CD8-positive, alpha-beta memory T cell (primary cell): ENCODE measurements at regions of chr15 and their contacts with region 1.

Region 1: GRCh38 chr15:74950078-74951000 is 6.2 kb downstream of the RPP25 start:
- DNase-seq: peak; percentile 64 to 82 (median 69)
- H3K4me3 ChIP-seq: no peak overlapping the region
- H3K4me3 Mint-ChIP-seq: peak overlapping the region in 1 of 7 donors; percentile 1
- H3K27ac ChIP-seq: no peak overlapping the region
- H3K27ac Mint-ChIP-seq: no peak overlapping the region
- H3K4me1 ChIP-seq: peaks cover 3% of the 10 kb centered on the region
- H3K4me1 Mint-ChIP-seq: peaks cover 0 to under 1% (median 0%) of the 10 kb centered on the region in 3 donors
- H3K27me3 ChIP-seq: no peaks in the 10 kb centered on the region
- H3K27me3 Mint-ChIP-seq: peaks cover 0 to 3% of the 10 kb centered on the region in 2 donors

Region 2: GRCh38 chr15:74781431-74782258 is 168.7 kb before region 1 on chr15 and contains the start of gene CSK:
- CTCF ChIA-PET with region 1: interaction called, 19 read pairs
- POLR2A ChIA-PET with region 1: no interaction called
- DNase-seq: peak; percentile 76 to 87 (median 83)
- H3K4me3 ChIP-seq: peak within 1 kb of the TSS; percentile 99
- H3K4me3 Mint-ChIP-seq: peak within 1 kb of the TSS; percentile 85 to 98 (median 95)
- H3K27ac ChIP-seq: peak within 1 kb of the TSS; percentile 74
- H3K27ac Mint-ChIP-seq: peak within 1 kb of the TSS; percentile 93 to 100 (median 98)
- H3K4me1 ChIP-seq: peaks cover 66% of the 10 kb centered on the region
- H3K4me1 Mint-ChIP-seq: peaks cover 71 to 81% (median 76%) of the 10 kb centered on the region in 3 donors
- H3K27me3 ChIP-seq: no peaks in the 10 kb centered on the region
- H3K27me3 Mint-ChIP-seq: peaks cover 0 to 5% of the 10 kb centered on the region in 2 donors
- total RNA-seq, gene CSK: 288 to 294 TPM

Region 3: GRCh38 chr15:74787251-74788041 is 162.9 kb before region 1 on chr15:
- CTCF ChIA-PET with region 1: interaction called, 19 read pairs
- POLR2A ChIA-PET with region 1: no interaction called
- DNase-seq: peak; percentile 88 to 99 (median 96)
- H3K4me3 ChIP-seq: peak overlapping the region; percentile 80
- H3K4me3 Mint-ChIP-seq: peak overlapping the region; percentile 85 to 97 (median 91)
- H3K27ac ChIP-seq: peak overlapping the region; percentile 69
- H3K27ac Mint-ChIP-seq: peak overlapping the region; percentile 92 to 99 (median 98)
- H3K4me1 ChIP-seq: peaks cover 75% of the 10 kb centered on the region
- H3K4me1 Mint-ChIP-seq: peaks cover 77 to 89% (median 84%) of the 10 kb centered on the region in 3 donors
- H3K27me3 ChIP-seq: no peaks in the 10 kb centered on the region
- H3K27me3 Mint-ChIP-seq: peaks cover 0 to 7% of the 10 kb centered on the region in 2 donors

Region 4: DNA sequence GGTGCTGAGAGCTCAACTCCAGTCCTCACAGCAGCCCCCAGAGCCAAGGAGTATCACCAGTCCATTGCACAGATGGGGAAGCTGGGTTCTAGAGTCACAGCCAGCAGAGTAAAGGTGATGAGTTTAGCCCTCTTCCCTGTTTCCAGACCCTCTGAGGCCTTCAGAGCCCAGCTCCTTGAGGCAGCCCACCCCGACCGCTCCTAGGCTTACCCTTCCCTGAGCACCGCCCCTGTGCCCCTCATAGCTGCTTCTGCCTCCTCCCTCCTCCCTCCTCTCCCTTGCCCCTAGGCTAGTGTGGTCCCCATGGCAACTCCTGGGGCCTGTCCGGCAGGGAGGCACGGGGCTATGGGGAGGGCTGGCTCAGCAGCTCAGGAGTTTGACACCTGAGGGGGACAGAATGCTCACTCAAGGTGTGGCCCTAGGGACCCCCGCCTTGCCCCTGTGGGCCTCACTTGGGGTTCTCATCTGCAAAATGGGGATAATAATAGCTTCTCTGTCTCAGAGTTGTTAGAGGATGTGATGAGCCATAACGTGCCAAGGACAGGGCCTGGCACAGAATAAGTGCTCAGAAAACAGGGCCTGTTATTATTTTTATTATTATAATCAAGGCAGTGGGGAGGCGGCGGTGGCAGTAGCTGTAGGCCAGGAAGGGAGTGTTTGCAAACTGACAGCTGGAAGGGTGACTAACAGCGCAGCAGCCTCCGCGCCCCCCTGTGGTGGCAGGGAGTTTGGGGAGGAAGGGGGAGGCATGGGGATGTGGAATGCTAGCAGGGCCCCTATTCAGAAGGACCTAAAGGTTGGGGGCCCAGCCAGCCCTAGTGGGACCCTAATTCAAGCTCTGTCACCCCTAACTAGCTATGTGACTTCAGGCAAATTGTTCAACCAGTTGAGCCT is 157.0 kb before region 1 on chr15:
- CTCF ChIA-PET with region 1: interaction called, 19 read pairs
- POLR2A ChIA-PET with region 1: interaction called, 3 read pairs
- DNase-seq: peak; percentile 71 to 85 (median 74)
- H3K4me3 ChIP-seq: peak overlapping the region; percentile 46
- H3K4me3 Mint-ChIP-seq: peak overlapping the region; percentile 66 to 91 (median 85)
- H3K27ac ChIP-seq: no peak overlapping the region
- H3K27ac Mint-ChIP-seq: peak overlapping the region; percentile 81 to 98 (median 93)
- H3K4me1 ChIP-seq: peaks cover 99% of the 10 kb centered on the region
- H3K4me1 Mint-ChIP-seq: peaks cover 84 to 93% (median 89%) of the 10 kb centered on the region in 3 donors
- H3K27me3 ChIP-seq: no peaks in the 10 kb centered on the region
- H3K27me3 Mint-ChIP-seq: no peaks in the 10 kb centered on the region

Region 5: DNA sequence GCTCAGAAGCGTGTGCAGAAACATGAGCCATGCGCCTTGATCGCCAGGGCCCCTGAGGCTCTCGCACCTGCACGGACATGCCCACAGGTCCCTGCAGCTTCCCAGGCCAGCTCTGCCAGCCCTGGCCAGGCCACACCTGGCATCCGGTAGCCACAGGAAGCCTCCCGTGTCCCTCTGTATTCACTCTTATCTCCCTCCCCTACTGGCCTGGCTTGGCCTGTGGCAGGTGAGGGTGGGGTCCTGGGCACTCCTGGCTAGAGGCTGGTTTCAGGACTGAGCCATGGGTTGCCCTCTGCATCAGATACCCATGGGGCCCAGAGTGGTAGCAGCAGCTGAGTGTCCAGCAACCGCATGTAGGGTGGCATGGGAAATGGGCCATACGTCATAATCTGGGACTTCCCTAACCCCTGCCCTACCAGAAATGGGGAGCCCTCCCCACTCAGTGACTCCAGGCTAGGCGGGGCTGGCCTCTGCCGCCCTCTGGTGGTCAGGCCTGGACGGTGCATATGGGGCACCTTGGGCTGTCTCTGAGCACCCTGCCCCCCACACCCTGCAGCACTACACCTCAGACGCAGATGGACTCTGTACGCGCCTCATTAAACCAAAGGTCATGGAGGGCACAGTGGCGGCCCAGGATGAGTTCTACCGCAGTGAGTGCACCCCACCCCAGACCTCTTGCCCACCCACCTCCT is 150.3 kb before region 1 on chr15:
- CTCF ChIA-PET with region 1: interaction called, 10 read pairs
- POLR2A ChIA-PET with region 1: interaction called, 3 read pairs
- DNase-seq: peak; percentile 81 to 91 (median 85)
- H3K4me3 ChIP-seq: peak overlapping the region; percentile 32
- H3K4me3 Mint-ChIP-seq: peak overlapping the region in 6 of 7 donors; percentile 19 to 40 (median 26)
- H3K27ac ChIP-seq: peak overlapping the region; percentile 65
- H3K27ac Mint-ChIP-seq: peak overlapping the region; percentile 79 to 97 (median 94)
- H3K4me1 ChIP-seq: peaks cover 57% of the 10 kb centered on the region
- H3K4me1 Mint-ChIP-seq: peaks cover 42 to 53% (median 48%) of the 10 kb centered on the region in 3 donors
- H3K27me3 ChIP-seq: no peaks in the 10 kb centered on the region
- H3K27me3 Mint-ChIP-seq: no peaks in the 10 kb centered on the region

Region 6: DNA sequence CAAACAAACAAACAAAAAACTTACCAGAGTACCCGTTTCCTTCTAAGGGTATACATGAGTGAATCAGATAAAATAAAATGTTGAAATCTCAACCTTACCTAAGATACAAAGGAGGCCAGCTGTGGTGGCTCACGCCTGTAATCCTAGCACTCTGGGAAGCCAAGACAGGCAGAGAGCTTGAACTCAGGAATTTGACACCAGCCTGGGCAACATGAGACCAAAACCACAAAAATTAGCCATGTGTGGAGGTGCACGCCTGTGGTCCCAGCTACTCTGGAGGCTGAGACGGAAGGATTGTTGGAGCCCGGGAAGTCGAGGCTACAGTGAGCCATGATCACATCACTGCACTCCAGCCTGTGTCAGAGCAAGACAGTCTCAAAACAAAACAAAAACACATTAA is 32.7 kb before region 1 on chr15:
- CTCF ChIA-PET with region 1: no interaction called
- POLR2A ChIA-PET with region 1: no interaction called
- DNase-seq: no peak
- H3K4me3 ChIP-seq: no peak overlapping the region
- H3K4me3 Mint-ChIP-seq: no peak overlapping the region
- H3K27ac ChIP-seq: no peak overlapping the region
- H3K27ac Mint-ChIP-seq: no peak overlapping the region
- H3K4me1 ChIP-seq: no peaks in the 10 kb centered on the region
- H3K4me1 Mint-ChIP-seq: no peaks in the 10 kb centered on the region
- H3K27me3 ChIP-seq: no peaks in the 10 kb centered on the region
- H3K27me3 Mint-ChIP-seq: no peaks in the 10 kb centered on the region

Region 7: GRCh38 chr15:74978503-74978902 is 28.2 kb after region 1 on chr15:
- CTCF ChIA-PET with region 1: no interaction called
- POLR2A ChIA-PET with region 1: no interaction called
- DNase-seq: no peak
- H3K4me3 ChIP-seq: no peak overlapping the region
- H3K4me3 Mint-ChIP-seq: no peak overlapping the region
- H3K27ac ChIP-seq: no peak overlapping the region
- H3K27ac Mint-ChIP-seq: no peak overlapping the region
- H3K4me1 ChIP-seq: no peaks in the 10 kb centered on the region
- H3K4me1 Mint-ChIP-seq: no peaks in the 10 kb centered on the region
- H3K27me3 ChIP-seq: no peaks in the 10 kb centered on the region
- H3K27me3 Mint-ChIP-seq: peaks cover 9 to 22% of the 10 kb centered on the region in 2 donors